Colonic mucosa (tissue), 4 donors: ENCODE measurements at regions of chr1 and their contacts with region 1.

Region 1: DNA sequence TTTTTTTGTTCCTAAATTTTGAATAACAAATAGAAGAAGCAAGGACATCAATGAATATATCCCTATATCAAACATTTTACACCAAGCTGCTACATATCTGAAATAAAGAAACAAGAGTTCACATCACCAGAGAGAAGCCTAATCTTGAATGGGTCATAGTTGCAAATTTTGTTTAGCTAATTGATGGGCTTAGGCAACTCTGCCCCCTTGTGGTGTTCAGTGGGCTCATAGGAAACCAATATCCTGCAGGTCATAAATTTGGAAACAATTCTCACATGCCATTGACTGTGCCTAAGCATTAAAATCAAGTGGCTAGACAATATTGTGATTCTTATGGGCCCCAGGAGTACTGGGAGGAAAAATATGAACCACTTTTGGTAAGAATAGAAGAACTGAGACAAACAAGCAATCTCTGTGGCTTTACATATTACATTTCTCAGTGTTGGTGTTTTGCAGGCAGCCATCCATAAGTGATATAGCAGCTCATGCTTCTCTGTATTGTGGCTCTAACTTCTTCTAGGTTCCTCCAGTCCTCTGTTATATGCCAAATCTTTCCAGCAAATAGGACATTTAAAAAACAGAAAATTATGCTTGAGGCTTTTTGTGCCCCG is 1262.8 kb upstream of the PRMT6 start:
- DNase-seq: peak; percentile 35
- H3K4me3 ChIP-seq: no peak overlapping the region
- H3K27ac ChIP-seq: no peak overlapping the region
- H3K4me1 ChIP-seq: no peaks in the 10 kb centered on the region
- H3K27me3 ChIP-seq: no peaks in the 10 kb centered on the region
- CTCF ChIP-seq: peak; percentile 56

Region 2: GRCh38 chr1:104780470-104781078 is 1013.1 kb before region 1 on chr1:
- intact Hi-C with region 1: loop called (anchors 5 kb)
- DNase-seq: no peak
- H3K4me3 ChIP-seq: no peak overlapping the region
- H3K27ac ChIP-seq: no peak overlapping the region
- H3K4me1 ChIP-seq: no peaks in the 10 kb centered on the region
- H3K27me3 ChIP-seq: no peaks in the 10 kb centered on the region
- CTCF ChIP-seq: peak; percentile 63

Region 3: GRCh38 chr1:104979651-104980050 is 814.0 kb before region 1 on chr1:
- intact Hi-C with region 1: loop called (anchors 5 kb)
- DNase-seq: no peak
- H3K4me3 ChIP-seq: no peak overlapping the region
- H3K27ac ChIP-seq: no peak overlapping the region
- H3K4me1 ChIP-seq: no peaks in the 10 kb centered on the region
- H3K27me3 ChIP-seq: no peaks in the 10 kb centered on the region
- CTCF ChIP-seq: no peak

Region 4: GRCh38 chr1:105419030-105419429 is 374.6 kb before region 1 on chr1:
- intact Hi-C with region 1: no loop called
- DNase-seq: no peak
- H3K4me3 ChIP-seq: no peak overlapping the region
- H3K27ac ChIP-seq: no peak overlapping the region
- H3K4me1 ChIP-seq: no peaks in the 10 kb centered on the region
- H3K27me3 ChIP-seq: no peaks in the 10 kb centered on the region
- CTCF ChIP-seq: no peak

Region 5: DNA sequence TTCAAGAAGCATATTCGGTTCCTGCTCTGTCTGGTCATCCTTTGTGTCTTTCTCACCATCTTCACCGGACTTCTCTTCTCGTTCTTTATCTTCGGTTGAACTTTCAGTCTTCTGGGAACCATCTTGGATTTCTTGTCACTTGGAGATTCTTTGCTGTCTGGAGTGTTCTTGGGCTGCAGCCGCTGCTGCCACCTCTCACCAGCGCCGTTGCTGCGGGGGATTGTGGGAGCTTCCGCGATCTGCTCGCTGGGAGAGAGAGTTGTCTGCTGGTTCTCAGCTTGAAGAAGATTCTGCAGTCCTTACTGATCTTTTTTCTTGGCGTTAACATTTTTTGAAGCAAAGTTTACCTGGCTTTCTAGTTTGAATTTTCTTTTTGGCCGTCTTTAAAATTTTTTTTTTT is 97.7 kb after region 1 on chr1:
- intact Hi-C with region 1: no loop called
- DNase-seq: no peak
- H3K4me3 ChIP-seq: no peak overlapping the region
- H3K27ac ChIP-seq: no peak overlapping the region
- H3K4me1 ChIP-seq: no peaks in the 10 kb centered on the region
- H3K27me3 ChIP-seq: no peaks in the 10 kb centered on the region
- CTCF ChIP-seq: no peak